ENCODE measurements at regions of chr14 and their contacts with region 1.

Region 1: DNA sequence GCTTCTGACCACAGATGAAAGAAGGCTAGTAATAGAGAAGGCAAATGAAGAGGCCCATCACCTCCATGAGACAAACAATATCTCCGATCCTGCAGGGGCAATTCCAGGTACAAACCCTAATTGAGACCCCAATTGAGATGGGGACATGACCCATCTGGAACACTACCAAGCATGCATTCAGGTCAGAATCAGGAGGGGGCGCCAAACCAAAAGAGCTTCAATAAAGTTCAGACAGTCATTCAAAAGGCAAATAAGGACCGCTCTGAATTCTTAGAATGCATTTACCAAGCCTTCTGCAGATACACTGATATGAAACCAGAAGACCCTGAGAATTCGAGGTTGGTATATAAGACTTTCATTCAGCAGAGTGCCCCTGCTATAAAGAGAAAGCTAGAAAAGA is 10.2 kb upstream of the EDDM3B start:
- DNase-seq: peak; percentile 57
- ATAC-seq: peak; percentile 76
- H3K4me3 Mint-ChIP-seq: no peak overlapping the region
- H3K27ac Mint-ChIP-seq: no peak overlapping the region
- H3K4me1 Mint-ChIP-seq: peaks cover 26% of the 10 kb centered on the region
- H3K27me3 Mint-ChIP-seq: peaks cover 4% of the 10 kb centered on the region
- CTCF ChIP-seq: 0 out of 2 replicates have a peak, but pooled peaks have one; percentile 28

Region 2: GRCh38 chr14:20743256-20743959 is 14.6 kb before region 1 on chr14:
- CTCF ChIA-PET with region 1: interaction called, 22 read pairs
- POLR2A ChIA-PET with region 1: no interaction called
- DNase-seq: no peak
- ATAC-seq: no peak
- H3K4me3 Mint-ChIP-seq: no peak overlapping the region
- H3K27ac Mint-ChIP-seq: no peak overlapping the region
- H3K4me1 Mint-ChIP-seq: peaks cover 7% of the 10 kb centered on the region
- H3K27me3 Mint-ChIP-seq: peaks cover 2% of the 10 kb centered on the region; the same call in 1 of the 2 replicates
- CTCF ChIP-seq: no peak

Region 3: GRCh38 chr14:20774338-20774737 is 16.4 kb after region 1 on chr14:
- CTCF ChIA-PET with region 1: interaction called, 12 read pairs
- POLR2A ChIA-PET with region 1: interaction called, 4 read pairs
- DNase-seq: no peak
- ATAC-seq: no peak
- H3K4me3 Mint-ChIP-seq: peak overlapping the region; percentile 56
- H3K27ac Mint-ChIP-seq: peak overlapping the region; percentile 99
- H3K4me1 Mint-ChIP-seq: peaks cover 70% of the 10 kb centered on the region
- H3K27me3 Mint-ChIP-seq: peaks cover 8% of the 10 kb centered on the region
- CTCF ChIP-seq: no peak

Region 4: DNA sequence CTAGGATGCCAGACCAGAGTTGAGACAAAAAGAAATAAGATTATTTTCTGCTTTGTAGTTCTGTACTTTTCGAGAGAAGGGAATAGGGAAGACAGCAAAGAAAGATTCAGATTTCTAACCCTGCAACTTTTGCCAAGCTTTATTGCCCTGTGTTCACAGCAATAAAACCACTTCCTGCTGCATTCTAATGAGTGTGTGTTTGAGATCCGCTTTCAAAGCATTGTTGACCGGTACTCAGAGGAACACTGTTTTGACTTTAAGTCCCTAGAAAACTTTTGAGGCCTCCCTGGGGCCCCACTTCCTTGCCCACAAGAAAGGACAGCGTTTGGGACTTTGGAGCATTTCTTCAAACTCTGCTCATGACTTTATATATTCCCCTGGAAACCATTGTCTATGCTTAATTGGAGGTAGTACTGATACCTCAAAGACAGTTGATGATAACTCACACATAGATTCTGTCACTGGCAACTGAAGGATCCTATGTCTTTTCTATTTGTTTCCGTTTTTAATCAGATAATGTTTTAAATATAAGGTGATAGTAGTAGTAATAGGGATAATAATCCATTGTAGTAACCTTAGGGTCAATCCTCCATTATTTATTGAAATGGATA is 24.4 kb after region 1 on chr14:
- CTCF ChIA-PET with region 1: interaction called, 16 read pairs
- POLR2A ChIA-PET with region 1: no interaction called
- DNase-seq: no peak
- ATAC-seq: no peak
- H3K4me3 Mint-ChIP-seq: no peak overlapping the region
- H3K27ac Mint-ChIP-seq: peak overlapping the region; percentile 54
- H3K4me1 Mint-ChIP-seq: peaks cover 56% of the 10 kb centered on the region
- H3K27me3 Mint-ChIP-seq: no peaks in the 10 kb centered on the region; the same call in 1 of the 2 replicates
- CTCF ChIP-seq: no peak

Region 5: GRCh38 chr14:20818861-20819260 is 60.9 kb after region 1 on chr14:
- CTCF ChIA-PET with region 1: interaction called, 12 read pairs
- POLR2A ChIA-PET with region 1: no interaction called
- DNase-seq: peak; percentile 36
- ATAC-seq: peak; percentile 50
- H3K4me3 Mint-ChIP-seq: no peak overlapping the region
- H3K27ac Mint-ChIP-seq: no peak overlapping the region
- H3K4me1 Mint-ChIP-seq: peaks cover 53% of the 10 kb centered on the region
- H3K27me3 Mint-ChIP-seq: no peaks in the 10 kb centered on the region
- CTCF ChIP-seq: no peak

Region 6: DNA sequence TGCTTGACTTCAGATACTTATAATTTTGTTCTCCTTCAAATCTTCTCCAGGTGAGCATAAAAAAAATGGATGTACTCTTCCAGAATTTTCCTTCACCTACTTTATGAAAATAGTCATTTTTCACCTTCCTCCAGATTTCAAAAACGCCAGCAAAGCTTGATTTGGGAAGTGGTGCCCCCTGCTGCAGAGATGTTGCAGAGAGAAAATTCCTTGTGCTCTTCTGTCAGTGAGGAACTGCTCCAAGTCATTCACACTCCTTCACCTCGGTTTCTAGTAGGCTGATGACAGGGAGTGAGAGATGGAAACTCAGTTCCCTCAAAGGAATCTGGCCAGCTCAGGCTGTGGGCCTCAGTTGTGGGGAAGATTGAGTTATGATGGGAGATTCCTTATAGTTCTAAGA is 109.0 kb after region 1 on chr14:
- CTCF ChIA-PET with region 1: interaction called, 11 read pairs
- POLR2A ChIA-PET with region 1: no interaction called
- DNase-seq: peak; percentile 30
- ATAC-seq: peak; percentile 73
- H3K4me3 Mint-ChIP-seq: no peak overlapping the region
- H3K27ac Mint-ChIP-seq: no peak overlapping the region
- H3K4me1 Mint-ChIP-seq: no peaks in the 10 kb centered on the region; the same call in 1 of the 2 replicates
- H3K27me3 Mint-ChIP-seq: peaks cover 21% of the 10 kb centered on the region
- CTCF ChIP-seq: no peak; the same call in 1 of the 2 replicates